K562 (cell line): ENCODE measurements at regions of chr20 and their contacts with region 1.

Region 1: GRCh38 chr20:35079472-35080347 is 12.9 kb downstream of the TRPC4AP start:
- DNase-seq: no peak
- ATAC-seq: no peak
- H3K4me3 ChIP-seq: no peak overlapping the region
- H3K27ac ChIP-seq: no peak overlapping the region
- H3K4me1 ChIP-seq: no peaks in the 10 kb centered on the region; a peak in 2 of 5 replicates
- H3K27me3 ChIP-seq: no peaks in the 10 kb centered on the region
- CTCF ChIP-seq: no peak
- EP300 ChIP-seq: no peak
- POLR2A ChIP-seq: no peak
- RAD21 ChIP-seq: no peak

Region 2: DNA sequence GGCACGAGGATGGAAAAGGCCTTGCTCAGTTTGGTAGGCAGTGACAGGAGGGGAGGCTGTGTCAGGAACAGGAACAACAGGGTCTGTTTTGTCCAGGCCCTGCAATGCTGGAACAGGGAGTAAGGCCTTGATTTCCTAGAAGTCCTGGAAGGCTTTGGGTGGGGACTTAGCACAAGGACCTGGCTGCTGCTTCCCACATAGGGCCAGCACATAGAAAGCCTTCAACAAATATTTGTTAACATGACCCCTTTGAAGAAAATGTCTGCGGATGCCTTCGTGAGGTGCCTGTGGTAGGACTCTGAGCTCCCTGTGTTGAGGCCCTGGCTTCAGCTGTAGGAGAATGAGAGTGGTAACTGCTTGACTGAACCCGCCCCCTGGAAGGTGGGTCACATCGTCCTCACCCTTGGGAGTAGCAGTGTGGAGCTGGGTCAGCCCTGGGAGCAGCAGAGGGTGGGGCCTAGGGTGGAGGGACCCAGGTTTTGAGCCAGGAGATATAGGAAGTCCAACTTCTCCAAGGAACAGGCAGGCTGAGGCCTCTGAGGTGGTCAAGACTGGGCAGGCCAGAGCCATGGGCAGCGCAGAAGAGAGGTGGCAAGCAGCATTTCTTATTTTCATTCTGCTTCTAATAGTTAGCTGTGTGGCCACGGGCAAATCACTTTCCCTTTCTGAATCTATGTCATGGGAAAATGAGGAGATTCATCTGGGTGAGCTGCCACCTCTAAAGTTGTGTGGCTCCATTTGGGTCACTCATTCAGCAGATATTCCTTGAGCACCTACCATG is 938.7 kb after region 1 on chr20:
- CTCF ChIA-PET with region 1: no interaction called
- POLR2A ChIA-PET with region 1: no interaction called
- in situ Hi-C with region 1: no loop called
- intact Hi-C with region 1: no loop called
- DNase-seq: no peak
- ATAC-seq: no peak; the same call in 2 of the 3 replicates
- H3K4me3 ChIP-seq: no peak overlapping the region
- H3K27ac ChIP-seq: no peak overlapping the region
- H3K4me1 ChIP-seq: peaks cover 0 to 3% of the 10 kb centered on the region in 2 experiments; a peak in 2 of 5 replicates
- H3K27me3 ChIP-seq: no peaks in the 10 kb centered on the region
- CTCF ChIP-seq: no peak
- EP300 ChIP-seq: no peak
- POLR2A ChIP-seq: no peak
- RAD21 ChIP-seq: no peak

Region 3: DNA sequence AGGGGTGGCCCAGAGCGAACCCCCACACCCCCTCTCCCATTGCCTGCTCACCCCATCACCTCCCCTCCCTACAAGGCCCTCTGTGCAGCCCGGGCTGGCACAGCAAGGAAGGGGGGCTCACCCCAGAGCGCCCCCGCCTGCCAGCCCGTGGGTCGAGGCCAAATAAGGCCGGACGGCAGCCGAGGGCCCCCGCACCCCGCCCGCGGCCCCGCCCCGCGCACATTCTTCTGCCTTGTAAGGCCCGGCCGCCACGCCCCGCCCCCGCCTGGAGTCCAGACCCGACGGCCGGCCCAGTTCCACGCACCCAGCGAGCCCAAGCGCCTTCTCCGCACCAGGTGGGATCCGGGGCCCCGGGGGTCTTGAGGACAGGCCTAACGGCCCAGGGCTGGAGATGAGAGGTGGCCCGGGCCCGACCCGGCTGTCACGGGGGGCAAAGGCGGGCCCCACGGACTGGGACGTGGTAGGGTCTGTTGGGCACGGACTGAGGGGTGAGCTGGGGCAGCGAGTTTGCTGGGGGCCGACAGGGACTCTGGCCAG is 1461.6 kb after region 1 on chr20 and contains the start of gene MYL9:
- CTCF ChIA-PET with region 1: no interaction called
- POLR2A ChIA-PET with region 1: no interaction called
- in situ Hi-C with region 1: loop called (anchors 10 kb)
- intact Hi-C with region 1: no loop called
- DNase-seq: peak; percentile 77 to 94 (median 88)
- ATAC-seq: peak; percentile 93
- H3K4me3 ChIP-seq: peak within 1 kb of the TSS; percentile 41
- H3K27ac ChIP-seq: peak within 1 kb of the TSS; percentile 66; the same call in 1 of the 3 replicates
- H3K4me1 ChIP-seq: peaks cover 0 to 40% of the 10 kb centered on the region in 2 experiments; a peak in 3 of 5 replicates
- H3K27me3 ChIP-seq: no peaks in the 10 kb centered on the region
- CTCF ChIP-seq: no peak
- EP300 ChIP-seq: no peak
- POLR2A ChIP-seq: no peak
- RAD21 ChIP-seq: no peak
- polyA plus RNA-seq, gene MYL9: 0.11 TPM in 1 of 2 experiments, not detected in the other